CD4-positive, alpha-beta memory T cell (primary cell): ENCODE measurements at regions of chr14 and their contacts with region 1.

Region 1: GRCh38 chr14:21703357-21704326 is 30.0 kb upstream of the OR4E1 start:
- DNase-seq: peak; percentile 14 to 42 (median 35)
- H3K4me3 ChIP-seq: no peak overlapping the region
- H3K4me3 Mint-ChIP-seq: no peak overlapping the region
- H3K27ac ChIP-seq: no peak overlapping the region
- H3K27ac Mint-ChIP-seq: peak overlapping the region in 1 of 7 donors; percentile 32
- H3K4me1 ChIP-seq: peaks cover 17% of the 10 kb centered on the region
- H3K4me1 Mint-ChIP-seq: peaks cover 10 to 23% (median 16%) of the 10 kb centered on the region in 4 donors
- H3K27me3 ChIP-seq: no peaks in the 10 kb centered on the region
- H3K27me3 Mint-ChIP-seq: peaks cover 3% of the 10 kb centered on the region in 2 donors

Region 2: DNA sequence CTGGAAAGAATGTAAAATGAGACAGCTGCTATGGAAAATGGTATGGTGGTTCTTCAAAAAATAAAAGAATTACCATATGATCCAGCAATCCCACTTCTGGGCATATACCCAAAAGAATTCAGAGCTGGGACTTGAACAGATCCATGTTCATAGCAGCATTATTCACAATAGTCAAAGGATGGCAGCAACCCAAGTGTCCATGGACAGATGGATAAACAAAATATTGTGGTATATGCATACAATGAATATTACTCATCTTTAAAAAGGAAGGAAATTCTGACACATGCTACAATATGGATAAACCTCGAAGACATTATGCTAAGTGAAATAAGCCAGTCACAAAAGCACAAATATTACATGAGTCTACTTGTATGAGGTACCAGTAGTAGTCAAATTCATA is 236.0 kb before region 1 on chr14:
- CTCF ChIA-PET with region 1: no interaction called
- POLR2A ChIA-PET with region 1: no interaction called
- intact Hi-C with region 1: no loop called
- DNase-seq: no peak
- H3K4me3 ChIP-seq: no peak overlapping the region
- H3K4me3 Mint-ChIP-seq: no peak overlapping the region
- H3K27ac ChIP-seq: no peak overlapping the region
- H3K27ac Mint-ChIP-seq: no peak overlapping the region
- H3K4me1 ChIP-seq: no peaks in the 10 kb centered on the region
- H3K4me1 Mint-ChIP-seq: peaks cover 0 to 5% (median 2%) of the 10 kb centered on the region in 4 donors
- H3K27me3 ChIP-seq: no peaks in the 10 kb centered on the region
- H3K27me3 Mint-ChIP-seq: no peaks in the 10 kb centered on the region

Region 3: DNA sequence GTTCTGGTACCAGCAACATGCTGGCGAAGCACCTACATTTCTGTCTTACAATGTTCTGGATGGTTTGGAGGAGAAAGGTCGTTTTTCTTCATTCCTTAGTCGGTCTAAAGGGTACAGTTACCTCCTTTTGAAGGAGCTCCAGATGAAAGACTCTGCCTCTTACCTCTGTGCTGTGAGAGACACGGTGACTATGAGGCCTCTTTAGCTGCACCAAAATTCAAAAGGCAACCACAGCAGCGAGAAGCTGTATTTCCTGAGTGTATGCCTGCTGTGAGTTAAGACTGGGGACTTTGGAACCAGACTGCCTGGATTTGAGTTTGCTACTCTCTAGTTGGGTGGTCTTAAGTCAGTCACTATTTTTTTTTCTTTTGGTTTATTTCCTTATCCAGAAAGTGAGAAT is 60.2 kb before region 1 on chr14:
- CTCF ChIA-PET with region 1: no interaction called
- POLR2A ChIA-PET with region 1: no interaction called
- intact Hi-C with region 1: loop called (anchors 2 kb)
- DNase-seq: no peak
- H3K4me3 ChIP-seq: no peak overlapping the region
- H3K4me3 Mint-ChIP-seq: peak overlapping the region in 3 of 8 donors; percentile 33 to 70 (median 34)
- H3K27ac ChIP-seq: no peak overlapping the region
- H3K27ac Mint-ChIP-seq: no peak overlapping the region
- H3K4me1 ChIP-seq: no peaks in the 10 kb centered on the region
- H3K4me1 Mint-ChIP-seq: peaks cover 0 to 6% (median 2%) of the 10 kb centered on the region in 4 donors
- H3K27me3 ChIP-seq: no peaks in the 10 kb centered on the region
- H3K27me3 Mint-ChIP-seq: peaks cover 6 to 9% of the 10 kb centered on the region in 2 donors

Region 4: DNA sequence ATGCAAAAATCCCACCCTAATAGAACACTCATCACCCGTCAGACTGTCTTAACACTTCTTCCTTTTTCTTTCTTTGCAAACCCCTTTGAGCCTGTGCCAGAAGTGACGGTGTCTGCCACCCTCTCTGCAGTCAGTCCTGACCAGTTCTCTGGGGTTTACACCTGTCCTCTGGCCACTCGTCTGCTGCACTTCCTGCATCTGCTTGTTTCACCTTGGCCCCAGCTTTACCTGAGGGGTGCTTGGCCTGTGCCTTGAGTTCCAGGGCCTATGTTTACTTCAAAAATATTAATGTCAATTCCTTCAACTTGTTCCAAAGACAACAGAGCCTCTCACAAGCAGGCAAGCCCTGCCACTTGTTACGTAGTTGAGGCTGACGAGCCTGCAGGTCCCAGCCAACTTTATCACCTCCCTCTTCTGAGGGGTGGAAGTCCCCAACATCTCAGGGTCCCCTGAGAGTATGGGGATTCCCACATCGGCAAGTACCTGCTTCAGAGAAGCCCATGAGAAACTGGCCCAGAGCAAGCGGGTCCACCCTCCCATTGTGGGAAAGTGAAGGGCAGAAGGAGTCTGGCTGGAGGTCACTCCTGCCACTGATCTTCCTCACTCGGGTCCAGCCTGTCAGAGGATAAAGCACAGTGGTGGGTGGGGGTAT is 680.0 kb after region 1 on chr14:
- CTCF ChIA-PET with region 1: no interaction called
- POLR2A ChIA-PET with region 1: no interaction called
- intact Hi-C with region 1: no loop called
- DNase-seq: peak in 3 of 5 donors; percentile 1 to 51 (median 21)
- H3K4me3 ChIP-seq: no peak overlapping the region
- H3K4me3 Mint-ChIP-seq: no peak overlapping the region
- H3K27ac ChIP-seq: peak overlapping the region; percentile 49
- H3K27ac Mint-ChIP-seq: peak overlapping the region in 5 of 7 donors; percentile 60 to 82 (median 77)
- H3K4me1 ChIP-seq: no peaks in the 10 kb centered on the region
- H3K4me1 Mint-ChIP-seq: no peaks in the 10 kb centered on the region
- H3K27me3 ChIP-seq: no peaks in the 10 kb centered on the region
- H3K27me3 Mint-ChIP-seq: no peaks in the 10 kb centered on the region